ENCODE measurements at regions of chr4 and their contacts with region 1.

Region 1: DNA sequence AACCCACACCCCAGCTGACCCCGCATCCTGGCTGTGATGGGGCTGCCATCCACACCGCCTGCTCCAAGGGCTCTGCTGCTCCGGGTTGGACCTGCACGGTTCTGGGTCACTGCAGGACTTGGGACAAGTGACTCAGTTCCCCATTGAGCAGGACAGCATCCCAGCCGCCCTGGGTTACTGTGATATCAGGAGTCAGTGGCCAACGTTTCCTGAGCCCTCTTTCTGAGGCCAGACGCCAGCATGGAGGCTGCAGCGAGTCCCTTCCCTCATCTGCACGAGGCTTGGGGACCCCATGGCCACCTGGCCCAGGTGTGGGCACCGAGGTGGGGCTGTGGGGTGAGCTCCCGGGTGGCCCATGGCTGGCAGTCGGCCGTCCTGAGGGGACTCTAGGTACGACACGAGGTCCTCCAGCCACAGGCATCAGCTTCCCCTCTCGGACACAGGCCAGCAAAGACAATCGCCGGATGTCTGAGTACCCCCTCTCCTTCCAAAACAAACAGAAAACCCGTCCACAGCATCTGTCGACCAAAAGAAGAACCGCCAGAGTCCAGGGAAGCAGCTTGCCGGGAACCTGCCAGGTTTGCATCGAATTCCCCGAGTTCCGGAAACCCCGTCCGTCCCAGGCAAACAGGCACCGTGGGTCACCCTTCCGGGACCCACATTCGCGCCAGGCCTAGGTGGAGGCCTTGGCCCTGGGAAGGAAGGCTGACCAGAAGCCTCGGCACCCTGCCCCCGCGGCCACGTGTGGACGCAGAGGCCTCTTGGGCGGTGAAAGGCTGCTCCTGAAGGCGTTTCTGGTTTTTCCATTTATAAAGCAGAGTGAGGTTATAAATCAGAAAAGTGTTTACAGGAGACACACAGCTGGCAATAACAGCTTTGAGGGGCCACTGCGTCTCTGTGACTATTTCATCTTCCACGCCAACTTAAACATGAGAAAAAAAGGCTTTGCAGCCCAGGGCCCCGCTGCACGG is 136.0 kb downstream of the FAM53A start:
- DNase-seq: no peak
- H3K4me3 ChIP-seq: no peak overlapping the region
- H3K27ac ChIP-seq: no peak overlapping the region
- H3K4me1 ChIP-seq: no peaks in the 10 kb centered on the region
- H3K27me3 ChIP-seq: peaks cover 24% of the 10 kb centered on the region
- CTCF ChIP-seq: no peak
- EP300 ChIP-seq: no peak
- RAD21 ChIP-seq: no peak

Region 2: GRCh38 chr4:1200425-1201035 is 347.6 kb before region 1 on chr4:
- CTCF ChIA-PET with region 1: no interaction called
- POLR2A ChIA-PET with region 1: no interaction called
- DNase-seq: peak; percentile 61
- H3K4me3 ChIP-seq: no peak overlapping the region
- H3K27ac ChIP-seq: no peak overlapping the region
- H3K4me1 ChIP-seq: peaks cover 8 to 28% of the 10 kb centered on the region in 2 experiments; a peak in 2 of 4 replicates
- H3K27me3 ChIP-seq: no peaks in the 10 kb centered on the region
- CTCF ChIP-seq: no peak
- EP300 ChIP-seq: peak in 1 of 2 experiments; percentile 18; a peak in 1 of 4 replicates
- RAD21 ChIP-seq: no peak

Region 3: DNA sequence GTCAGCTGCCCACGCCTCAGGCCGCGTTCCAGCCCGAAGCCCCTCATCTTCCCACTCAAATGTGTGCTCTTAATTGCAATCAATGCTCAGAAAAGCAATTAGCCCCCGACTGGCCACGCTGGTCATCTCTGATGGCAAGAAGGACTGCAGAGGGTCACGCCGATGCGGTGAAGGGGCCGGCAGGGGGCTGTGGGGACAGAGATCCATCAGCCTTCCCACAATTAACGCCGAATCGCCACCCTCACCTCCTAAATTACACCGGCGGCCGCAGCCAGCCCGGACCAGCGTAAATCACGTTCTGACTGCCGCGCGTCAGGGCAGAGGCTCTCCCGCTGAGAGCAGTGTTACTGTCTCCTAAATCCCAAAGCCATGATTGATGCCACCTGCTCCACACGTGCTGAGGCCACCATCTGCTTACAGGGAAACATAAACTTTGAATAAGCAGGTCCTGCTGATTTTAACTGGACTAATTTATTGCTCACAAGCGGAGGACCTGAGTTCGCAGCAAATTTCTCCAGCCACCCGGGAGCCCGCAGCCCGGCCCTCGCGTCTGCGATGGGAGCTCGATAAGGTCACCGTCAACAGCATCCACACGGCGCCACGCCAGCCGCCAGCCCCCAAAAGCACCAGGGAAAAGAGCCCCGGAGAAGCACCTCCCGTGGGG is 14.6 kb before region 1 on chr4:
- CTCF ChIA-PET with region 1: interaction called, 35 read pairs
- POLR2A ChIA-PET with region 1: no interaction called
- DNase-seq: no peak
- H3K4me3 ChIP-seq: no peak overlapping the region
- H3K27ac ChIP-seq: no peak overlapping the region
- H3K4me1 ChIP-seq: no peaks in the 10 kb centered on the region; a peak in 1 of 4 replicates
- H3K27me3 ChIP-seq: peaks cover 57% of the 10 kb centered on the region
- CTCF ChIP-seq: no peak
- EP300 ChIP-seq: no peak
- RAD21 ChIP-seq: no peak

Region 4: GRCh38 chr4:1646690-1647089 is 98.5 kb after region 1 on chr4:
- CTCF ChIA-PET with region 1: no interaction called
- POLR2A ChIA-PET with region 1: no interaction called
- DNase-seq: no peak
- H3K4me3 ChIP-seq: no peak overlapping the region
- H3K27ac ChIP-seq: no peak overlapping the region
- H3K4me1 ChIP-seq: peaks cover 0 to 18% of the 10 kb centered on the region in 2 experiments; a peak in 1 of 4 replicates
- H3K27me3 ChIP-seq: no peaks in the 10 kb centered on the region
- CTCF ChIP-seq: no peak
- EP300 ChIP-seq: no peak
- RAD21 ChIP-seq: no peak